Left cardiac atrium (tissue), 4 donors: ENCODE measurements at regions of chr15 and their contacts with region 1.

Region 1: DNA sequence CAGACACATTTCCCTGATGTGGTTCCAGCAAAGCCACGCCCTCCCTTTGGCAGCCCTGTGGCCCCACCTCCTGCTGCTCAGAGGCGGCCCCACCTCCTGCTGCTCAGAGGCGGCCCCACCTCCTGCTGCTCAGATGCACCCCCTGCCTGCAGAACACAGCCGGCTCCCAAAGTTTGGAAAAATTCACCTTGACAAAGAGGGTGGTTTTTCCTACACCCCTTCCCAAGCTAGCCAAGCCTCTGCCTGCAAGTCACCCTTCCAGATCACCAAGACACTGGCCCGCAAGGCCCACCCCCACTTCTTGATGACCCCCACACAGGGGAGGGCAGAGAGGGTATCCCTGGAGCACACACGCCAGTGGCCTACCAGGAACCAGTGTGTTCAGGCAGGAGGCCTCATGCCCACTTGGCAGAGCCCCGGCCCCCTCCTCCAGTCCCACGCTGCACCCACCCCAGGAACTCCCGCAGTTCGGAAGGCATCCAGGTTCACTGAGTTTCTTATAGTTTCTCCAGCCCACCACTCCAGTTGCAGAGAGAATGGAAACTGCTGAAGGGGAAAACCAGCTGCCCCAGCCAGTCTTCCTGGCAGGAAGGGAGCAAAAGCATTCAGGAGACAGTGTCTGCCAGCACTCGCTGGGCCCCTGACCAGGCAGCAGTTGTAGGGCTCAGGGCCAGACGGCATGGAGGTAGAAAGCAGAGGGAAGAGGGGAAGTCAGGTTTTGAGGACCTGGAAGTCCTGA is 2.3 kb upstream of the HAPLN3 start:
- DNase-seq: peak; percentile 85
- ATAC-seq: peak; percentile 86 to 91

Region 2: GRCh38 chr15:88620995-88621772 is 276.4 kb before region 1 on chr15 and contains the start of gene AEN:
- intact Hi-C with region 1: loop called in 1 of 2 experiments (anchors 10 kb)
- DNase-seq: peak; percentile 97
- ATAC-seq: peak; percentile 97 to 99
- total RNA-seq, gene AEN: 9.9 to 15.4 TPM

Region 3: DNA sequence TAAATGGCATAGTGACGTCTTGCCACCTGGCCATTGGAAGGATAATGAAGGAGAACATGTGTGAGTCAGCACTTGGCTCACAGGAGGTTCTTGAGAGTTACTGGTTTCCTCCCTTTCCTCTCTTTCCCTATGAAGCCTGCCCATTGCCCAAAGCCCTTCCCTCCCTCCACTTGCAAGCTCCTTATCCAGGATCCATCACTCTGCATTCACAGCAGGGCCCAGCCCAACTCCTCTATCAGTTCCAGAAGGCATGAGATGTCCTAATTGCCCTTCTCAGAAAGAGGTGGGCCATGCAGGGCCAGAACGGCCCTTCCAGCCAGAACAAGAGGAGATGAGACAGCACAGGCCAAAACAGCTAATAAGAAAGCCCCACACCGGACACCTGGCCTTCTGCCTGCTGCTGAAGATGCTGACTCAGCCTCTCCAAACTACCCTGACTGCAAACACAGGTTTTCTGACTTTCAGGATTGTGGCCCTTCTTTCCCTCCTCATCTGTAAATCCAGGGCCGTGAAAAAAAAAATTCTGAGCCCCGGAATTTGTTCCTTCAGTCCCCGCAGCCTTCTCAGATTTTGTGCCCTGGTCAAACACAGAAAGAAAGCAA is 32.0 kb before region 1 on chr15:
- intact Hi-C with region 1: no loop called
- DNase-seq: no peak
- ATAC-seq: peak in 1 of 2 donors; percentile 51

Region 4: GRCh38 chr15:89192766-89193165 is 295.1 kb after region 1 on chr15:
- intact Hi-C with region 1: loop called in 1 of 2 experiments (anchors 5 kb)
- DNase-seq: no peak
- ATAC-seq: no peak

Region 5: GRCh38 chr15:89812011-89812835 is 914.6 kb after region 1 on chr15:
- intact Hi-C with region 1: no loop called
- DNase-seq: peak; percentile 64
- ATAC-seq: peak in 1 of 2 donors; percentile 71